Activated CD4-positive, alpha-beta T cell treated with anti-CD3 and anti-CD28 coated beads for 36 hours (primary cell): ENCODE measurements at regions of chrX and their contacts with region 1.

Region 1: DNA sequence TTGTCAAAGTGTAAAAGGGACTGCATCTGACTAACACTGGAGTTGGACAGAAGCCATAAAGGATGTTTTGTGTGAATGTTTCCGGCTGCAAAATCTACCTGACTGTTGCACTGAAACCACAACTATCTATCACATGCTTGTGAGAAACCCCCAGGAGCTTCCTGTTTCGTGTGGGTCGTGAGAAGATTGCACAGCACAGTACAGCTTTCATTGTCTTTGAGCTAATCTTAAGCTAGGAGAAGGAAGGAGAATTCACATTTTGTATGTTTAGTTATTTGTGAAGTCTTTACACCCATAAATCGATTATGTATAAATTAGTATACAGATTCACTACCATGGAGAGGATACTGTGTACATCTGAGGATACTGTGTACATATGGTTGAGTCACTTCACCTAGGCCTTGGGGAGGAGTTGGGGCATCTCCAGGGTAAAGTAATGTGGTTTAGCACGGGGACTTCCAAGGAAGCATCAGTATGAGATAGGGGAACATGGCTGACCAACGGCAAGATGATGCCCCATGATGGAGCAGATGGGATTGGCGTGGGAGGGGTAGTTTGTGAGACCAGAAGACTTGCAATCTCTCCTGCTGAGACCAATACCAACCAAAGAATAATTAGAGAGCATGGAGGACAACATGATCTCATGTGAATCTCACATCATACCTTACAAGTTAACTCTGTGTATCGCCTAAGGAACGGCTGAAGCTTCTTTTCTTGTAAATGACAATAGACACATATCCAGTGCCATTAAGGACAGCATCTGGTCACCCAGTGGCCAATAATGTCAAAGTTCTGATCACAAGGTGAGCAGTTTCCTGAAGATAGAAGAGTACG is 43.1 kb upstream of the FAM9C start:
- DNase-seq: peak; percentile 69
- ATAC-seq: peak; percentile 66
- H3K4me3 Mint-ChIP-seq: peak overlapping the region; percentile 69
- H3K27ac Mint-ChIP-seq: peak overlapping the region; percentile 92
- H3K4me1 Mint-ChIP-seq: peaks cover 88% of the 10 kb centered on the region
- H3K27me3 Mint-ChIP-seq: no peaks in the 10 kb centered on the region

Region 2: DNA sequence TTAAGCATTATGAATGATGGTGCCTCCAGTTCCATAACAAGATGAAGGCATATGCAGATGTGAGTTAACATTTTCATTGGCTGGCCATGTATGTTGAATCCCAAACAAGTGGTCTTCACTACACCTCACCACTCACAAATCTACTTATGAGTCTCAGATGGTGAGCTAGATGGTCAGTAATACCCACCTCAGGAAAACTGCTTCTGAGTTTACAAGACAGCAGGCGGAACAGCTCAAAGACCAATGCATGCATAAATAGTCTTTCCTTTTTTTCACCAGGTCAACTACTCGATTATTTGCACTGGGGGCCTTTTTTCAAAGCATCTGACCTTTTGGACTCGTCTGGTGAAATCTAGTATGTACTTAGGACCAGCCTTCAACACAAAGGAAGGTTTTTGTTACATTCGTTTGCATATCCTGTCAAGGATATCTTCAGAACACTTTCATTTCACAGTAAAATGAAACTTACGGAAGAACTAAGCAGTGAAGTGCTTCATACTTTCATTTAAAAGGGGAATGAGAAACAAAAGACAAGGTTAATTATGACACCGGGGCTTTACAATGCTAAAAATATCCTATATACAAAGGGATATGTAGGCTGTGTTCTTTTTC is 243.8 kb before region 1 on chrX:
- CTCF ChIA-PET with region 1: no interaction called
- POLR2A ChIA-PET with region 1: no interaction called
- intact Hi-C with region 1: no loop called
- DNase-seq: no peak
- ATAC-seq: peak; percentile 78
- H3K4me3 Mint-ChIP-seq: peak overlapping the region; percentile 57
- H3K27ac Mint-ChIP-seq: peak overlapping the region; percentile 96
- H3K4me1 Mint-ChIP-seq: peaks cover 14% of the 10 kb centered on the region
- H3K27me3 Mint-ChIP-seq: no peaks in the 10 kb centered on the region

Region 3: DNA sequence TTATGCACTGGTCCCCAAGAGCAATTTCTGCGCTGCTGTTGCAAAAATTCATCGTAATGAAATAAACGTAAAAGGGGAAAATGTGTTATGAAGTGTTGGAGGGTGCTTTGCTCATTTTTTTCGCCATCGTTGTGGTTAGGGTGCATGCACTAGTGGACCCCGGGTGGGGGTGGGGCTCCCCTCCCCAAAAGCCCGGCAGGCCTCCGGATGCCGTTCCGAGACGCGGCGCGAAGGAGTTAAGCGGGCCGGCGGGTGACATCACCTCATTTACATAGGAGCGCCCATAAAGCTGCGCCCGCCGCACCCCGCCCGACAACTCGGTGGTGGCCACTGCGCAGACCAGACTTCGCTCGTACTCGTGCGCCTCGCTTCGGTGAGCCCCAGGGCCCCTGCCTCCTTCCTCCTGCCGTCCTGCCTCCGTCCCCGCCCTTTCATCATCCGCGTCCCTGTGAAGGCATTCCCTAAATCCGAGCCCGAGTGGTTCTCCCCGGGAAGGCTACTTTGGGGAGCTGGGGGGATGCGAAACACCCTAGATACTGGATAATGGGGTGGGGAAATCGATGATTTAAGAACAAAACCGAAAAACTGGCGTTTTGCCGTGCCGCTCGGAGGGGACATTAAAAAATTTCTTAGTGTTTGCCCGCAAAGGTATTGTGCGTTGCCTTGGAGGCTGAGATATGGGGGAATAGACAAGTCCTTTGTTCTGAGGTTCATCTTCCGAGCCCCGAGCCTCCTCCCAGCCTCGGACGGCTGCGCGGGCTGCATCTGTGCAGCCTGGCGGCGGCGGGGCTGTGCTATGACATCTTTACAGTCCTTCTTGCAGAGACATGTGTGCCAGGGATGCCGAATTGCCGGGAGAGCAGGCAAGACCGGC is 112.5 kb before region 1 on chrX and contains the start of gene TMSB4X:
- CTCF ChIA-PET with region 1: interaction called, 8 read pairs
- POLR2A ChIA-PET with region 1: interaction called, 9 read pairs
- intact Hi-C with region 1: loop called (anchors 1 to 2 kb)
- DNase-seq: peak; percentile 91
- ATAC-seq: peak; percentile 52
- H3K4me3 Mint-ChIP-seq: peak within 1 kb of the TSS; percentile 90
- H3K27ac Mint-ChIP-seq: peak within 1 kb of the TSS; percentile 96
- H3K4me1 Mint-ChIP-seq: peaks cover 24% of the 10 kb centered on the region
- H3K27me3 Mint-ChIP-seq: no peaks in the 10 kb centered on the region
- total RNA-seq, gene TMSB4X: 3,666 to 4,468 TPM

Region 4: DNA sequence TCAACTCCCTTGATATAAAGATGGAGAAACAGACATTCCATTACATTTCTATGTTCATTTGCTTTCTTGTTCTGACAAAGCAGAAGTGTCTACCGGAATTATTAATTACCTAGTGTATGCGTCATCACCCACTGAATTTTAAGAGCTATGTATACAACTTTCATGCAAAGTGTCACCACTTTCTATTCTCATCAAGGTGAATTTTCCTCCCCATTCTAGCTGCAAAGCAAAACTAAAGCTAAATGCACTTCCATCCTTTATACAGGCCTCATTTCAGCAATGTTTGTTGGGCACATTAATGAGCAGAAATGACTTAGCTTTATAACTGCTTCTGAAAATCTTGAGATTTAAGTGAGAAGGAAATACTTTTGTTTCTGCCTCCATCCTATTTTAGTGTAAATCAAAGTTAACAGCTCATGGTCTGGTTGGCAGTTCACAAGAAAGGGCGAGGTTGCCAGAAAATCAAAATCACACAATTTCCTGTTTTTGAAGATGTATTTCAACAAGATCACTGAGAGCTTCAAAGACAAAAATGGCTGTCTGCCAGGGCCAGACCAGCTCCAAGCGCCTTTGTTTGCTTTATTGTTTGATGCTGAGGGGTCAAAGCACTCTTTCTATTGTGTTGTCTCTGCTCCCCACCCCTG is 35.9 kb before region 1 on chrX:
- CTCF ChIA-PET with region 1: interaction called, 6 read pairs
- POLR2A ChIA-PET with region 1: interaction called, 7 read pairs
- intact Hi-C with region 1: loop called (anchors 1 to 2 kb)
- DNase-seq: no peak
- ATAC-seq: peak; percentile 81
- H3K4me3 Mint-ChIP-seq: no peak overlapping the region
- H3K27ac Mint-ChIP-seq: peak overlapping the region; percentile 90
- H3K4me1 Mint-ChIP-seq: peaks cover 83% of the 10 kb centered on the region
- H3K27me3 Mint-ChIP-seq: no peaks in the 10 kb centered on the region

Region 5: GRCh38 chrX:13376857-13377549 is 289.5 kb after region 1 on chrX:
- CTCF ChIA-PET with region 1: no interaction called
- POLR2A ChIA-PET with region 1: no interaction called
- intact Hi-C with region 1: loop called (anchors 5 to 10 kb)
- DNase-seq: peak; percentile 32
- ATAC-seq: peak; percentile 52
- H3K4me3 Mint-ChIP-seq: no peak overlapping the region
- H3K27ac Mint-ChIP-seq: peak overlapping the region; percentile 7
- H3K4me1 Mint-ChIP-seq: peaks cover 30% of the 10 kb centered on the region
- H3K27me3 Mint-ChIP-seq: no peaks in the 10 kb centered on the region

Region 6: DNA sequence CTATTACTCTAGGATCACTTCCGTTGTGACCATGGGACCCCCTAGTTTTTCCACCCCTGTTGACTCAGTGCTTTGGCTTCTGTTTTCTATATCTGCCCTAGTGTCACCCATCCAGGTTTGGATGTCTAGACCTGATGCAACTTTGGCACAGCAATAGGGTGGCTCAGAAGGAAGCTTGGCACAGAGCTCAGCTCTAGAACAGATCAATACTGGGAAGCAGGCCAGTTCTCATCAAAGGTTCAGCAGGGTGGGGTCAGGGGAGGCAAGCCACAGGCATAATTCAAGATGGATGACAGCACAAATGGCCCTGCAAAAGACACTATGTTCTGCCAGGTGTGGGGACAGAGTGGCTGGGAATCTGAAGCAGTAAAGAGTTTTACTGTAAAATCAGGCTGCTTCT is 407.7 kb after region 1 on chrX:
- CTCF ChIA-PET with region 1: no interaction called
- POLR2A ChIA-PET with region 1: no interaction called
- intact Hi-C with region 1: no loop called
- DNase-seq: no peak
- ATAC-seq: no peak
- H3K4me3 Mint-ChIP-seq: no peak overlapping the region
- H3K27ac Mint-ChIP-seq: no peak overlapping the region
- H3K4me1 Mint-ChIP-seq: no peaks in the 10 kb centered on the region
- H3K27me3 Mint-ChIP-seq: no peaks in the 10 kb centered on the region

Region 7: GRCh38 chrX:13646154-13646549 is 558.6 kb after region 1 on chrX:
- CTCF ChIA-PET with region 1: no interaction called
- POLR2A ChIA-PET with region 1: no interaction called
- intact Hi-C with region 1: loop called (anchors 5 to 10 kb)
- DNase-seq: peak; percentile 68
- ATAC-seq: peak; percentile 31
- H3K4me3 Mint-ChIP-seq: no peak overlapping the region
- H3K27ac Mint-ChIP-seq: no peak overlapping the region
- H3K4me1 Mint-ChIP-seq: peaks cover 12% of the 10 kb centered on the region
- H3K27me3 Mint-ChIP-seq: no peaks in the 10 kb centered on the region

Region 8: DNA sequence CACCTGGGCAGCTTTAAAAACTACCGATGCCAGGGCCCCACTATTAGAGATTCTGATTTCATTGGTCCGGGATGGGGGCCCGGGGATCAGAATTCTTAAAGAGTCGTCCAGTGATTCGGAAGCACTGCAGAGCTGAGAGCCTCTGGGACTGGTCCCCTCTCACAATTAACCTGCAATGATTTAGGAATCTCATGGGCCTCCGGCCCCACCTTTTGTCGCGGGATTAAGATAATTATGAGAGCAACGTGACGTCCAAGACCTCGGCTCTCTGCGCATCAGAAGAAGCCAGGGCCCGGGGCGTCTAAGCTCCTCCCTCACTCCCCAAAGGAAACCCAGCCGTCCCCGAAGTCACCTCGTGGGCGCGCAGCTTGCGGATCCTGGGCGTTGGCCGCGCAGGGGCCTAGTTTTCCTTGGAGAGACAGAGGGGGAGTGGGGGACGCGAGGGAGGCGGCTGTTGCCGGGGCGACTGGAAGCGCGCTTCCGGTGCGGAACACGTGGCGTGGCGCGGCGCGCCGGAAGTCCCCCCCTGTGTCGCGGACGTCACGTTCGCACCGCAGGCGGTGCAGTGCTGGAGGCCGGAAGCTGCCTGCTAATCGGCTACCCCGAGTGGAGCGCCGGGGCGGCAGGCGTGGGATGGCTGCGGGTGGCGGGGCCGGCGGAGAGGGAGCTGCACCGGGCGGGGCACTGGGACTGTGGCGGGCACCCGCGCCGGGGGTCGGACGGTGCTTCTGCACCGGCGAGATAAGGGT is 942.1 kb after region 1 on chrX and contains the start of gene GEMIN8:
- CTCF ChIA-PET with region 1: no interaction called
- POLR2A ChIA-PET with region 1: no interaction called
- intact Hi-C with region 1: loop called (anchors 5 kb)
- DNase-seq: peak; percentile 90
- ATAC-seq: peak; percentile 75
- H3K4me3 Mint-ChIP-seq: peak within 1 kb of the TSS; percentile 87
- H3K27ac Mint-ChIP-seq: peak within 1 kb of the TSS; percentile 100
- H3K4me1 Mint-ChIP-seq: peaks cover 40% of the 10 kb centered on the region
- H3K27me3 Mint-ChIP-seq: peaks cover 2% of the 10 kb centered on the region
- total RNA-seq, gene GEMIN8: 14.9 to 15.6 TPM